T-cell (primary cell): ENCODE measurements at regions of chr10 and their contacts with region 1.

Region 1: DNA sequence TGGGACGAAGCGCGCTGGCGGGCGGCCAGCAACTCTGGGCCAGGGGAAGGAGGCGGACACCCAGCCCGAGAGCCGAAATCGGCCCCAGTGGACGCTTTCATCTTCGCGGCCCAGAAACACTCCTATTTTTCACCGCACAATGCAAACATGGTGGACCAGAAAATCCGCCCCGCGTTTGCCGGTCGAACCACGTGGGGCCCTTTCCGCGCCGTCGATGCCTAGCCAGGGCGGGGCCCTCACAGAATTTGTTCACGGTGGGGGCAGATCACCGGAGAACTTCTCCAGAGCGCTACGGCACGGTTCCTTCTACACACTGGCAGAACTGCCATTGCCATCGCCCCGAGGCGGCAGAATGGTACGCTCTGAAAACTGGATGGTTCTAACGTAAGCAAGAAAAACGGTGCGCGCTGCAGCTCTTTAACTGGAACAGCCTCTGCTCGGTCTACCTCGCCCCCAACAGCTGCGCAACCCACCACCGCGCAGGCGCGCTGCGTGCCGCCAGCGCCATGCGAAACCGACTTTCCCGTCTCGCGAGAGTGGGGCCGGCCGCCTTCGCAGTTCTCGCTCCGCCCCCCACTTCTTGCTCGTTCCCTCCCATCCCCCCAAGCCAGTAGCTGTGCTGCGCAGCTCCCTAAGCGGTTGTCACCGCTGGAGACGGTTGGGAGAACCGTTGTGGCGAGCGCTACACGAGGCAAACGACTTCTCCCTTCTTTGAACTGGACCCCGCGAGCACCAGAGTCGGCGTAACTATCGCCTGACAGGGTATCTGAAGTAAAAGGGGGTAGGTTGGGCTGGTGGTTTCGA is at the start of gene HNRNPH3:
- DNase-seq: peak; percentile 97 to 100 (median 98)
- ATAC-seq: peak; percentile 83 to 86 (median 84)
- H3K4me3 ChIP-seq: peak within 1 kb of the TSS; percentile 77 to 88
- H3K4me3 Mint-ChIP-seq: peak within 1 kb of the TSS; percentile 98 to 100 (median 100)
- H3K27ac ChIP-seq: peak within 1 kb of the TSS; percentile 95
- H3K27ac Mint-ChIP-seq: peak within 1 kb of the TSS; percentile 100
- H3K4me1 ChIP-seq: peaks cover 16 to 34% of the 10 kb centered on the region in 2 experiments
- H3K4me1 Mint-ChIP-seq: peaks cover 44 to 61% (median 47%) of the 10 kb centered on the region in 3 donors
- H3K27me3 ChIP-seq: no peaks in the 10 kb centered on the region
- H3K27me3 Mint-ChIP-seq: no peaks in the 10 kb centered on the region
- total RNA-seq, gene HNRNPH3: 128 to 186 (median 137) TPM

Region 2: GRCh38 chr10:68318331-68319059 is 13.2 kb before region 1 on chr10:
- CTCF ChIA-PET with region 1: no interaction called
- POLR2A ChIA-PET with region 1: interaction called, 3 to 10 read pairs
- DNase-seq: no peak
- ATAC-seq: no peak
- H3K4me3 ChIP-seq: no peak overlapping the region
- H3K4me3 Mint-ChIP-seq: no peak overlapping the region
- H3K27ac ChIP-seq: no peak overlapping the region
- H3K27ac Mint-ChIP-seq: no peak overlapping the region
- H3K4me1 ChIP-seq: peaks cover 6 to 9% of the 10 kb centered on the region in 2 experiments
- H3K4me1 Mint-ChIP-seq: peaks cover 5 to 9% (median 5%) of the 10 kb centered on the region in 3 donors
- H3K27me3 ChIP-seq: no peaks in the 10 kb centered on the region
- H3K27me3 Mint-ChIP-seq: no peaks in the 10 kb centered on the region

Region 3: DNA sequence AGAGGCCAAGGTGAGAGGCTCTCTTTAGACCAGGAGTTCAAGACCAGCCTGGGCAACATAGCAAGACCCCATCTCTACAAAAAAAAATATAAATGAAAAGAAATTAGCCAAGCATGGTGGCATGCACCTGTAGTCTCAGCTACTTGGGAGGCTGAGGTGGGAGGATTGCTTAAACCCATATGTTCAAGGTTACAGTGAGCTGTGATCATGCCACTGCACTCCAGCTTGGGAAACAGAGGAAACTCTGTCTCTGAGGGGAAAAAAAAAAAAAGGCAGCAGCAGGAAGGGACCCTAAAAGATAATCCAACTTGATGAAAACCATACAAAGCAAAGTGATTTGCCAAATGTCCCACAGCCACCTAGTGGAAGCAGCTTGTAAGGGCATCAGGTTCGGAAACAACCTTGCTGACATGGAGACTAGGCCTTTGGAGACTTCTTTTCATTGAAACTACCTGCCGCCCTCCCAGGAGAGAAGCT is 16.6 kb after region 1 on chr10:
- CTCF ChIA-PET with region 1: interaction called, 4 to 14 read pairs
- POLR2A ChIA-PET with region 1: interaction called, 3 to 4 read pairs
- DNase-seq: peak in 33 of 35 experiments; percentile 6 to 74 (median 34)
- ATAC-seq: peak; percentile 66 to 75 (median 68)
- H3K4me3 ChIP-seq: no peak overlapping the region
- H3K4me3 Mint-ChIP-seq: no peak overlapping the region
- H3K27ac ChIP-seq: no peak overlapping the region
- H3K27ac Mint-ChIP-seq: peak overlapping the region; percentile 74 to 86
- H3K4me1 ChIP-seq: no peaks in the 10 kb centered on the region
- H3K4me1 Mint-ChIP-seq: peaks cover 5 to 6% (median 6%) of the 10 kb centered on the region in 3 donors
- H3K27me3 ChIP-seq: no peaks in the 10 kb centered on the region
- H3K27me3 Mint-ChIP-seq: no peaks in the 10 kb centered on the region

Region 4: GRCh38 chr10:68364101-68364886 is 32.6 kb after region 1 on chr10:
- CTCF ChIA-PET with region 1: no interaction called
- POLR2A ChIA-PET with region 1: no interaction called
- DNase-seq: no peak
- ATAC-seq: no peak
- H3K4me3 ChIP-seq: no peak overlapping the region
- H3K4me3 Mint-ChIP-seq: no peak overlapping the region
- H3K27ac ChIP-seq: no peak overlapping the region
- H3K27ac Mint-ChIP-seq: peak overlapping the region in 1 of 2 donors; percentile 34
- H3K4me1 ChIP-seq: no peaks in the 10 kb centered on the region
- H3K4me1 Mint-ChIP-seq: no peaks in the 10 kb centered on the region
- H3K27me3 ChIP-seq: no peaks in the 10 kb centered on the region
- H3K27me3 Mint-ChIP-seq: no peaks in the 10 kb centered on the region

Region 5: DNA sequence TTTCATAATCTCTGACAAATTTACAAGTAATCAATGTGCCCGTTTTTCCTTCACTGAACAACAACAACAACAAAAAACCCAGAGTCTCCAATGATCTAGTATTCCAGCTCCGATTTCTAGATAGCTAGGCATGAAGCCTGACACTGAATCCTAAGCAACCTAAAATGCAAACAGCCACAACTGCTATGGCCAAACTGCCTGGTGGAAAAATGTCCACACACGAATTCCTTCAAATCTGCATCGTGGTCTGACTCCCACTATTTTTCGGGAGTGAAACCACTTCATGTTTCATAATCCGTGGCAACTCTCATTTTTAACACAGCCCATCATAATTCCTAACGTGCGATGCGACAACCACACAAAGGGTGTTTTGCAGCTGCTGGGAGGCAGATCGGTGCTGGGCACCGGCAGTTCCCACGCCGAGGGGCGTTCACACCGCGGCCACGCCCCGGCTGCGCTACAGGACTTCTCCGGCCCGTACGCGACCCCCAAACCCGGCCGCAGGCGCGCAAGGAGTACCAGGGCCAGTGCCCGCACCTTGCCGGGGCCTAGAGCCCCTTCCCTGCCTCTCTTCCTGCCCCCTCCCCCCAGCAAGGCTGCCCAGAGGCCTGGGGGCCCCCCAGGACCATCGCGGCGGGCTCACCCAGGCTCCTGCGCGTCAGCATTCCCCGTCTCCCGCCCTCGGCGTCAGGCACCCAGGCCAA is 74.6 kb after region 1 on chr10:
- CTCF ChIA-PET with region 1: no interaction called
- POLR2A ChIA-PET with region 1: interaction called in 1 of 2 experiments, 18 read pairs
- DNase-seq: peak in 15 of 35 experiments; percentile 1 to 38 (median 7)
- ATAC-seq: peak in 3 of 4 experiments; percentile 7 to 16 (median 13)
- H3K4me3 ChIP-seq: peak overlapping the region; percentile 89 to 98
- H3K4me3 Mint-ChIP-seq: peak overlapping the region; percentile 86 to 90 (median 87)
- H3K27ac ChIP-seq: peak overlapping the region; percentile 26
- H3K27ac Mint-ChIP-seq: peak overlapping the region; percentile 61 to 82
- H3K4me1 ChIP-seq: peaks cover 8 to 10% of the 10 kb centered on the region in 2 experiments
- H3K4me1 Mint-ChIP-seq: peaks cover 21 to 25% (median 23%) of the 10 kb centered on the region in 3 donors
- H3K27me3 ChIP-seq: no peaks in the 10 kb centered on the region
- H3K27me3 Mint-ChIP-seq: no peaks in the 10 kb centered on the region